Cardiac septum (tissue), 1 donor: ENCODE measurements at regions of chr1 and their contacts with region 1.

Region 1: GRCh38 chr1:26111530-26112406 is at the start of gene PDIK1L:
- DNase-seq: peak; percentile 97
- total RNA-seq, gene PDIK1L: 3.5 TPM

Region 2: DNA sequence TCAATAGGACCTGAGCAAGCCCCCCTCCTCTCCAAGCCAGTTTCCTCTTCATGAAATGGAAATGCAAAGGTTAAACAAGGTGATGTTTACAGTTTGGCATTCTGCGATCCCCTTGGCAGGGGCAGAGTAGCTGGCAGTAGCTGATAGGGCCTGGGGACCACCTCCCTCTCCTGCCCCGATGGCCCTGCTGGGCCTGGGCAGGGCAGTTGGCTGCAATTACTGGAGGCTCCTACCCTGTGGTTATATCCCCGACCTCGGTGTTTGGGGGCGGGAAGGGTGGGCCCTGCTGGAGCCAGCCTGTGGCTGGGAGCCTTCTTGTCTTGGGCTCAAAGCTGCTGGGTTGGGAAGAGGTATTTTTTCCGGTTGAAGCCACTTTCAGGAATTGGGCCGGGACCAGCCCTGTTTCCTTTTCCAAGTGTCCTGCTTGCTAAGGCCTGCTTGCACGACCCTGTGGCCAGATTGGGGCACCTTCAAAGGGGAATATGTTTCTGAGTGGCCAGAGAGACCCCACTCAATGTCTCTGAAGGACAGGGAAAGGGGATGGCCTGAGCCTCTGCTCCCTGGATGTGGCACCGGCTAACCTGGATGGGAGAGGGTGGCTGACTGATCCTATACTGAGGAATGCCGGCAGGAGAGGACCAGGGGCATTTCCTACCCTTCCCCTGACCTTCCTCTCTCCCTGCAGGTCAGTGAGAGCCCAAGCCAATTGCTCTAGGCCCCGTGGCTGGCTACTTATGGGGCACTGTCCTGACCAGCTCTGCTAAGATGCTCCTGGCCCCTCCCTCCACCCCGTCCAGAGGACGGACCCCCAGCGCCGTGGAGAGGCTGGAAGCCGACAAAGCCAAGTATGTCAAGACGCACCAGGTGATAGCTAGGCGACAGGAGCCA is 49.0 kb after region 1 on chr1:
- intact Hi-C with region 1: loop called (anchors 1 kb)
- DNase-seq: no peak

Region 3: GRCh38 chr1:26233903-26234643 is 122.3 kb after region 1 on chr1 and contains the start of gene CEP85:
- intact Hi-C with region 1: loop called (anchors 2 kb)
- DNase-seq: peak; percentile 100
- total RNA-seq, gene CEP85: 25.8 TPM